ENCODE measurements at regions of chr10 and their contacts with region 1.

Region 1: DNA sequence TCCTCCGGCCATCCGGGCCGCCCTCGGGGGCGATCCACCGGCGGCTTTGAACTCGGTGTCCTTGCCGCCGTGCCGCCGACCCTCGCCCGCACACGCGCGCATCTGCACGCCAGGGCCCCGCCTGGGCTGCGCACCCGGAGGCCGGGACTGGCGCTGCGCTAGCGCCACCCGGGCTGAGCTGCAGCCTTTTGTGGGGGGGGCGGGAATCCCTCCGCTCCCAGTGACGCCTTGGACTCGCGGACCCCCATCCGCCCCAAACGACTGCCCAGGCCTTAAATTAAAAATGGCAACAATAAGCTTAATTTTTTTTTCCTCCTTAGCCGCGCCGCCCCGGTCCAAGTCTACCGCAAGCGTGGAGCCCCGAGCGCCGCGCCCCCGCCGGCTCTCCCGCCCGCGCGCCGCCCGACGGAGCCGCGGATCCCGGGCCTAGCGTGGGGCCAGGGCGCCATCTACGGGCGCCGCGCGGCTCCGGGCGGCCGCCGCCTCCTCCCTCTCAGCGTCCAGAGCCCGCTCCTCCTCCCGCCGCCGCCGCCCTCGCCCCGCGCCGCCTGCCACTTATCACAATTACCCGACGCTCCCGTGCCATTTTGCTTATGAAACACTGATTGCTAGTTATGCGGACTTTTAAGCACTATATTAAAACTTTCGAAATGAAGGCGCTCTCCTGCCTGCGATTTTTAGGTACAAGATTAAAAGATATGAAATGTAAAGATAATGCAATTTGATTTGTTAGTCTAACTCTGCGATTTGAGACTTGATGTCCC is 7.5 kb upstream of the EBF3 start:
- DNase-seq: peak in 3 of 5 donors; percentile 53 to 79 (median 67)
- ATAC-seq: peak; percentile 34 to 94 (median 88)
- H3K4me3 ChIP-seq: peak overlapping the region; percentile 29 to 64 (median 50)
- H3K27ac ChIP-seq: no peak overlapping the region
- H3K4me1 ChIP-seq: peaks cover 6 to 58% (median 27%) of the 10 kb centered on the region in 12 donors
- H3K27me3 ChIP-seq: peaks cover 31 to 88% (median 66%) of the 10 kb centered on the region in 9 donors
- CTCF ChIP-seq: peak in 10 of 12 donors; percentile 55 to 84 (median 67)
- POLR2A ChIP-seq: no peak

Region 2: DNA sequence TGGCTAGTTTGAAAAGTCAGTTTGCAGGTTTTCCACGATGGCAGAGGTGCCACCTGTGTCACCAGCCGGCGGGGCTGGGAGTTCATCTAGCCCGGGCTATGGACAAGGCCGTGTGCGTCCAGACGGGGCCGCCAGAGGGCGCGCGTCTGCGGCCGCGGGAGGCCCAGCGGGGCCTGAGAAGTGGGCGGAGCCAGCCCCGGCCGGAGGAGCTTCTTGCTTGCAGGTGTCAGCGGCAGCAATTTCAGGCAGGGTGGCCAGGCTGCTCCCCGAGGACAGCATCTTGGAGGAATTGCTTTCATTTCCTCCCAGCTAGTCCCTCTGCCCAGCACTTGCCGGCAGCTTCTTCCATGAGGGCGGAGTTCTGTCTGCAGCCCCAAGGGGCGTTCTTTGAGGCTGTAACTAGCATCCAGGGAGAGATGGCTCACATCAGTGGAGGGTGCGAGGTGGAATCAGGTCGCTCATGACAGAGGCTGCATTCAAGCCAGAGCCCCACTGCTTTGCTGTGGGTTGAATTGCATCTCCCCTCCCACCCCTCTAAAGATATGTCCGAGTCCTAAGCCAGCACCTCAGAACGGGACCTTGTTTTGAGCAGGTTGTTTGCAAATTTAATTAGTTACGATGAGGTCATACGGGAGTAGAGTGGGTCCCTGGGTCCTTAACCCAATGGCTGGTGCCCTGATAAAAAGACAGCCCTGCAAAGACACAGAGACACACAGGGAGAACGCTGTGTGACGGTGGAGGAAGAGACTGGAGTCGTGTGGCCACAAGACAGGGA is 1759.4 kb before region 1 on chr10:
- intact Hi-C with region 1: loop called in 2 of 10 experiments (anchors 5 to 10 kb)
- DNase-seq: peak; percentile 73 to 92 (median 81)
- ATAC-seq: peak in 3 of 4 donors; percentile 86 to 92 (median 90)
- H3K4me3 ChIP-seq: peak overlapping the region in 9 of 12 donors; percentile 0 to 43 (median 34)
- H3K27ac ChIP-seq: no peak overlapping the region
- H3K4me1 ChIP-seq: peaks cover 0 to 21% (median 2%) of the 10 kb centered on the region in 12 donors
- H3K27me3 ChIP-seq: peaks cover 0 to 17% (median 0%) of the 10 kb centered on the region in 9 donors
- CTCF ChIP-seq: peak; percentile 89 to 98 (median 96)
- POLR2A ChIP-seq: no peak

Region 3: GRCh38 chr10:128274938-128275337 is 1696.6 kb before region 1 on chr10:
- intact Hi-C with region 1: loop called in 2 of 10 experiments (anchors 5 kb)
- DNase-seq: peak in 1 of 5 donors; percentile 45
- ATAC-seq: no peak
- H3K4me3 ChIP-seq: no peak overlapping the region
- H3K27ac ChIP-seq: no peak overlapping the region
- H3K4me1 ChIP-seq: peaks cover 0 to 11% (median 0%) of the 10 kb centered on the region in 12 donors
- H3K27me3 ChIP-seq: peaks cover 0 to 86% (median 13%) of the 10 kb centered on the region in 9 donors
- CTCF ChIP-seq: peak in 1 of 12 donors; percentile 22
- POLR2A ChIP-seq: no peak

Region 4: GRCh38 chr10:128631801-128632241 is 1339.7 kb before region 1 on chr10:
- intact Hi-C with region 1: loop called in 5 of 10 experiments (anchors 5 to 10 kb)
- DNase-seq: no peak
- ATAC-seq: no peak
- H3K4me3 ChIP-seq: no peak overlapping the region
- H3K27ac ChIP-seq: no peak overlapping the region
- H3K4me1 ChIP-seq: peaks cover 0 to 6% (median 0%) of the 10 kb centered on the region in 12 donors
- H3K27me3 ChIP-seq: peaks cover 0 to 9% (median 0%) of the 10 kb centered on the region in 9 donors
- CTCF ChIP-seq: peak; percentile 47 to 78 (median 65)
- POLR2A ChIP-seq: no peak

Region 5: DNA sequence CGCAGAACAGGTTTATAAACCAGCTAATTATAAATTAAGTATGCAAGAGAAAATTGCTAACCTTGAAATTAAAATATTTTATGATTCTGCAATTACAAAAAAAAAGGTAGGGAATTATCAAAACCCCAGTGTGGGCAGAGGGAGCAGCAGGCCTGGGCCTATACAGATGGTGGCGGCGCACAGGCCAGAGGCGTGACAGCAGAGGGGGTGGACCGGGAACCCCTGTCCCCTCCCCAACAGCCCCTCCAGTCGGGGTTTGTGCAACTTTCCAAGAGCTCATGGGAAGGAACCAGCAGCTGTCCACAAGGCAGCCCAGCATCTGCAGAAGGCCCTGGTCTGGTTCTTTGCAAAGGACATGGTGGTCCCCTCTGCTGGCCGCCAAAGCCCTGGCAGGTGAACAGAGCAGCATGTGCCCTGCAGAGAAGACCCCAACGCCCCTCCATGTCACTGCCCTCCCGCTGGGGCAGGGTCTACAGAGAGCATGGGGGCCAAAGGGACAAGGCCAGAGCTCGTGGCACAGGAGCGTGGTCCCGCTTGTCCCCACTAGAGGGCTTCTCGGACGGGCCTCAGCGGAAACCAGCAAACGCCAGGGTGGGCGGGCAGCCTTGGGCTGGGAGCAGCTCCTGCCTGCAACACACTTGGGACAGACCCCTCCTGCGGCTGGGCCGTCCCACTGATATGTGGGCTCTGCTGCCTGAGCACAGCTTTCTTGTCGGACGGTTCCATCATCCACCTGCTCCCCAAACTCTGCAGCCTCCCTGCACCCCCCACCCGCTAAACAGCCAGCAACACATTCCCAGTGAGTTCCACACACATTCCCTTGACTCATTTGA is 82.6 kb before region 1 on chr10:
- intact Hi-C with region 1: loop called in 6 of 10 experiments (anchors 2 to 5 kb)
- DNase-seq: peak; percentile 72 to 84 (median 78)
- ATAC-seq: peak; percentile 25 to 77 (median 74)
- H3K4me3 ChIP-seq: no peak overlapping the region
- H3K27ac ChIP-seq: peak overlapping the region in 4 of 12 donors; percentile 7 to 40 (median 24)
- H3K4me1 ChIP-seq: peaks cover 6 to 56% (median 32%) of the 10 kb centered on the region in 12 donors
- H3K27me3 ChIP-seq: no peaks in the 10 kb centered on the region
- CTCF ChIP-seq: peak; percentile 58 to 80 (median 72)
- POLR2A ChIP-seq: no peak

Measured in heart left ventricle (tissue), 16 donors.